ENCODE measurements at regions of chr17 and their contacts with region 1.

Region 1: DNA sequence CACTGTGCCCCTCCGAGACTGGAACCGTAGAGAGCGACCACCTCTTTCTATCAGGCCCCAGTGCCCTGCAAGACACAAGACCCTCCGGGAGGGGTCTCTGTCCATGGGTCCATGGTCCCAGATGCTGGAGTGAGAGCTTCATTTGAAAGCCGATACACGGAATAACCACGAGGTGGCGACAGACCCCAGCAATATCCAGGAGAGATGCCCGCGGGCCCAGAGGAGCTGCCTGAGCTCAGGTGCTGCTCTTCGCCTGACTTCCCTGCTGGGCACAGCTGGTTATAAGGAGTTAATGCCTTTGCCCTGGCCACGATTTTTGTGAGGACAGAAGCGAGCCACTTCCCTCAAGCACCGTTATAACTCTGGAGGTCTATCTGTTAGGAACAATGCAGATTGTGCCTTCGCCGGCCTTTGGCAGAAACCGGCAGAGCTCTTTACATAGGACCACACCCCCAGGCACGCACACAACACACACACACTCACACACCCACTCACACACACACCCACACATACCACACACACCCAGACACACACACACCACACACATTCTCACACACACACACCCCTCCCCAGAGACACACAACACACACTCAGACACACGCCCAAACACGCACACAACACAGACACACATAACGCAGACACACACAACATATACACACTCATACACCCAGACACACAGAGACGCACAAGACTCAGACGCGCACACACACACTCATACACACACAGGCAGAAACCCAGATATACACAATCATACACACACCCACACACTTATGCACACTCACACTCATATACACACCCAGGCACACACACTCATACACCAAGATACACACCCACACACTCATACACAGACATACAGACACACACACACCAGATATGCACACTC is 436.4 kb downstream of the SOX9 start:
- H3K4me3 ChIP-seq: no peak overlapping the region
- H3K27ac ChIP-seq: no peak overlapping the region
- H3K4me1 ChIP-seq: no peaks in the 10 kb centered on the region
- CTCF ChIP-seq: peak; percentile 75

Region 2: GRCh38 chr17:72456026-72456569 is 101.1 kb before region 1 on chr17:
- CTCF ChIA-PET with region 1: no interaction called
- POLR2A ChIA-PET with region 1: no interaction called
- H3K4me3 ChIP-seq: no peak overlapping the region
- H3K27ac ChIP-seq: no peak overlapping the region
- H3K4me1 ChIP-seq: peaks cover 8% of the 10 kb centered on the region; the same call in 1 of the 2 replicates
- CTCF ChIP-seq: no peak

Region 3: DNA sequence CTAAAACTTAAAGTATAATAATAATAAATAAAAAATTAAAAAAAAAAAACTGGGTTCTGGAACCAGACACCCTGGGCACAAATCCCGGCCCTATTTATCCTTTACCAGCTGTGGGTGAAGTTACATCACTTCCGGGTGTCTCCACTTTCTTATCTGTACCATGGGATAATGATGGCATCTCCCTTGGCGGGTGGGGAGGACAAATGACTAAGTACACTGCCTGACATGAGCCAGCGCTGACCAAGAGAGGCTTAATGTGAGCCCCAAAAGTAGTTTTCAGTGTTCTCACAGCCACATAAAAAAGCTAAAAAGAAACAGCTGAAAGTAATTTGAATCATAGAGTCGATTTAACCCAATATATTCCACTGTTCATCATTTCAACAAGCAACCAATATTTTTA is 11.4 kb before region 1 on chr17:
- CTCF ChIA-PET with region 1: interaction called, 14 read pairs
- POLR2A ChIA-PET with region 1: no interaction called
- H3K4me3 ChIP-seq: no peak overlapping the region
- H3K27ac ChIP-seq: no peak overlapping the region
- H3K4me1 ChIP-seq: no peaks in the 10 kb centered on the region
- CTCF ChIP-seq: no peak

Region 4: GRCh38 chr17:72580321-72581127 is 23.3 kb after region 1 on chr17:
- CTCF ChIA-PET with region 1: interaction called, 47 read pairs
- POLR2A ChIA-PET with region 1: no interaction called
- H3K4me3 ChIP-seq: no peak overlapping the region
- H3K27ac ChIP-seq: no peak overlapping the region
- H3K4me1 ChIP-seq: peaks cover 3% of the 10 kb centered on the region; the same call in 1 of the 2 replicates
- CTCF ChIP-seq: no peak

Region 5: GRCh38 chr17:72671016-72671415 is 113.8 kb after region 1 on chr17:
- CTCF ChIA-PET with region 1: interaction called, 11 read pairs
- POLR2A ChIA-PET with region 1: no interaction called
- H3K4me3 ChIP-seq: no peak overlapping the region
- H3K27ac ChIP-seq: no peak overlapping the region
- H3K4me1 ChIP-seq: no peaks in the 10 kb centered on the region
- CTCF ChIP-seq: no peak

Region 6: GRCh38 chr17:72715906-72716572 is 158.9 kb after region 1 on chr17:
- CTCF ChIA-PET with region 1: interaction called, 18 read pairs
- POLR2A ChIA-PET with region 1: interaction called, 4 read pairs
- H3K4me3 ChIP-seq: no peak overlapping the region
- H3K27ac ChIP-seq: no peak overlapping the region
- H3K4me1 ChIP-seq: 0 out of 2 replicates have a peak, but pooled peaks cover 3% of the 10 kb centered on the region
- CTCF ChIP-seq: no peak

Region 7: DNA sequence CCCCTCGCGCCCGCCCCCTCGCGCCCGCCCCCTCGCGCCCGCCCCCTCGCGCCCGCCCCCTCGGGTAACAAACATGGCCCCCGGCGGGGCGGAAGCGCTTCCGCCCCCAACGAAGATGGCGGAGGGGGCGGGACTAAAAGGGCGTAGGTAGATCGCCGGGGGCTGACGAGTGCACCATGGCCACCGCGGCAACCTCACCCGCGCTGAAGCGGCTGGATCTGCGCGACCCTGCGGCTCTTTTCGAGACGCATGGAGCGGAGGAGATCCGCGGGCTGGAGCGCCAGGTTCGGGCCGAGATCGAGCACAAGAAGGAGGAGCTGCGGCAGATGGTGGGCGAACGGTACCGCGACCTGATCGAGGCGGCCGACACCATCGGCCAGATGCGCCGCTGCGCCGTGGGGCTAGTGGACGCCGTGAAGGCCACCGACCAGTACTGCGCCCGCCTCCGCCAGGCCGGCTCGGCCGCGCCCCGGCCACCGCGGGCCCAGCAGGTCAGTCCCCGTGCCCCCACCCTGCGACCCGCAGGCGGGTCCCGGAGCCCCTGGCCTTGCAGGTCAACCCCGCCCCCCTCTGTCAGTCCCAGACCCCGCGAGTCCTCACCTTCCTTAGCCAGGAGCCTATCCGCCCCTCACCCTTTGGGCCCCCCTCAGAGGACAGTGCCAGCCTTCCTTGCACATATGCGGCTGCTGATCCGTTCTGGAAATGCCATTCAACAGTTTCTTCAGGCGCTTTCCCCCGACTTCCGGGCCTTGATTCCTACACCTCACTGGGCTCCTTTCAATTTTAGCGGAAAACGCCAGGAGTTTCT is 635.9 kb after region 1 on chr17 and contains the start of gene COG1:
- CTCF ChIA-PET with region 1: interaction called, 21 read pairs
- POLR2A ChIA-PET with region 1: no interaction called
- H3K4me3 ChIP-seq: peak within 1 kb of the TSS; percentile 93
- H3K27ac ChIP-seq: peak within 1 kb of the TSS; percentile 98
- H3K4me1 ChIP-seq: peaks cover 3% of the 10 kb centered on the region; the same call in 1 of the 2 replicates
- CTCF ChIP-seq: peak; percentile 73; the same call in 1 of the 2 replicates